Activated CD4-positive, alpha-beta T cell treated with anti-CD3 and anti-CD28 coated beads for 36 hours (primary cell): ENCODE measurements at regions of chr19 and their contacts with region 1.

Region 1: DNA sequence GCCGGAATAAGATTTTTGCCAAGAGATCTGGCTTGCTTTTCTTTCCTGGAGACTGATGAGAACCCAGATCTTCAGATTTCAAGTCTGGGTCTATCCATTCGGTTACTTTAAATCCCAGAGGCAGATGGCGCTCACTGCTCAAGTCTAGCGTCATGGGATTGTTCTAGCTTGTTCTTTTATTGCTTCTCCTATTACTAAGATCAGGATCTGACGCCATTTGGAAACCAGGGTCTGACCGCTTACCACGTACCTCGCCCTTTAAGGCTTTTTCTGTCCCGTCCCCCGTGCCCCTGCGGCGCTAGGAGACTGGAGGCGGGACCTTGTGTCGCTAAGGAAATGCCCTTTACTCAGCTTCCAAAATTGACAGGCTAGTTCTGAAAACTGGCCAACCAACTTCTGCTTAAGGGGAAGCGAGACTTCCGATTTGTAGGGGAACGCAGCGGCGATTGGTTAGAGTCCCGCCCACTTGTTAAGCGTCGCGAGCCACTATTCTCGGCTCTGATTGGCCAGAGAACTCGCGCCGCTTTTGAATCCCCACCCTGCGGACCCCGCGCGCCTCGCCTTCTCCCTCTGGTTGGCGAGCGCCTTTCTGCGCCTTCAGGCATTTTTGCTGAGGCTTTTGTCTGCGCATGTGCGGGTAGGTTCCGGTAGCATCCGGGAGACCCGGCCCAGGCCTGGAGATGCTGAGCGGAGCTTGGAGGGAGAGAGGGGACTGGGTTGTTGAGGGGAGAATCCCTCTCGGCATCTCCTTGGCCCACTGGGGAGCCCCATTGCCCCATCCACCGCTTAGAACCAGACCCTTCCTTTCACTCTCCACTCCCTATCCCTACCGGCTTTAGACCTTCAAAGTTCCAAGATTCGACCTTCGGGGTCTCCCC is 3.8 kb upstream of the C19orf84 start:
- DNase-seq: peak; percentile 99
- ATAC-seq: peak; percentile 88
- H3K4me3 Mint-ChIP-seq: peak overlapping the region; percentile 91
- H3K27ac Mint-ChIP-seq: peak overlapping the region; percentile 96
- H3K4me1 Mint-ChIP-seq: peaks cover 44% of the 10 kb centered on the region
- H3K27me3 Mint-ChIP-seq: no peaks in the 10 kb centered on the region

Region 2: DNA sequence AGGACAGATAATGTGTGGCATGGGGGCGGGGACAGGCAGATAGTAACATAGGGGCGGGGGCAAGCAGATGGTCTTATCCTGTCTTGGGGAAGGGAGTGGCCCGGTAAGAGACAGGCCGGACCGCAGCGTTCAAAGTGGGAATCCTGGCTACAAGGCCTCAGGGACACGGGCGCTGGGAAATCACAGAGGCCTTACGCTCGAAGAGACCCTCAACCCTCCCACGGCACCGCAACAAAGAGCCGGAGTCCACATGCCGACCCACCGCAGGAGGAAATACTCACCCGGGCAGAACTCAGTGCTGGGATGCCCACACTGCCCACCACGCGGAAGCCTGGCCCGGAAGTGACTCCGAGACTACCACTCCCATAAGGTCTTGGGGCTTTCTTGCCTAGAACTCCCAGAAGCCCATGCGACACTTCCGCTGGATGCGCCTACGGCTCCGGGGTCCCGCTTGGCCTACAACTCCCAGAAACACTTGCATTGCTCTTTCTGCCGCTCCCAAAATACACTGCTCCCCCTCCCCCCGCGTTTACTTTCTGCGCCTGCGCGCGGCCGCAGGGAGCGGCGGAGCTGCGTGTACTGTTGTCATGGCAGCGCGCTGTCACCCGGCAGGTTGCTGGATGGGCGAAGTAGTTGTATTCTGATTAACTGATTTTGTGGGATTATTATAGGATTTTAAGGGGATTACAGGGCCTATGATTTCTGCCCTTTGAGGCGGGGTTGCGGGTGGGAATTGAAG is 286.0 kb before region 1 on chr19 and contains the start of gene CTU1:
- CTCF ChIA-PET with region 1: no interaction called
- POLR2A ChIA-PET with region 1: no interaction called
- intact Hi-C with region 1: loop called in 1 of 2 experiments (anchors 1 kb)
- DNase-seq: peak; percentile 99
- ATAC-seq: peak; percentile 98
- H3K4me3 Mint-ChIP-seq: peak within 1 kb of the TSS; percentile 92
- H3K27ac Mint-ChIP-seq: peak within 1 kb of the TSS; percentile 91
- H3K4me1 Mint-ChIP-seq: peaks cover 36% of the 10 kb centered on the region
- H3K27me3 Mint-ChIP-seq: no peaks in the 10 kb centered on the region
- total RNA-seq, gene CTU1: 7.2 to 9.1 TPM

Region 3: GRCh38 chr19:51372649-51373504 is 21.3 kb before region 1 on chr19 and contains the start of gene NKG7:
- CTCF ChIA-PET with region 1: interaction called, 6 read pairs
- POLR2A ChIA-PET with region 1: interaction called, 11 read pairs
- intact Hi-C with region 1: loop called (anchors 1 kb)
- DNase-seq: peak; percentile 89
- ATAC-seq: peak; percentile 83
- H3K4me3 Mint-ChIP-seq: peak within 1 kb of the TSS; percentile 70
- H3K27ac Mint-ChIP-seq: peak within 1 kb of the TSS; percentile 94
- H3K4me1 Mint-ChIP-seq: peaks cover 73% of the 10 kb centered on the region
- H3K27me3 Mint-ChIP-seq: no peaks in the 10 kb centered on the region
- total RNA-seq, gene NKG7: 92.1 to 125 TPM

Region 4: DNA sequence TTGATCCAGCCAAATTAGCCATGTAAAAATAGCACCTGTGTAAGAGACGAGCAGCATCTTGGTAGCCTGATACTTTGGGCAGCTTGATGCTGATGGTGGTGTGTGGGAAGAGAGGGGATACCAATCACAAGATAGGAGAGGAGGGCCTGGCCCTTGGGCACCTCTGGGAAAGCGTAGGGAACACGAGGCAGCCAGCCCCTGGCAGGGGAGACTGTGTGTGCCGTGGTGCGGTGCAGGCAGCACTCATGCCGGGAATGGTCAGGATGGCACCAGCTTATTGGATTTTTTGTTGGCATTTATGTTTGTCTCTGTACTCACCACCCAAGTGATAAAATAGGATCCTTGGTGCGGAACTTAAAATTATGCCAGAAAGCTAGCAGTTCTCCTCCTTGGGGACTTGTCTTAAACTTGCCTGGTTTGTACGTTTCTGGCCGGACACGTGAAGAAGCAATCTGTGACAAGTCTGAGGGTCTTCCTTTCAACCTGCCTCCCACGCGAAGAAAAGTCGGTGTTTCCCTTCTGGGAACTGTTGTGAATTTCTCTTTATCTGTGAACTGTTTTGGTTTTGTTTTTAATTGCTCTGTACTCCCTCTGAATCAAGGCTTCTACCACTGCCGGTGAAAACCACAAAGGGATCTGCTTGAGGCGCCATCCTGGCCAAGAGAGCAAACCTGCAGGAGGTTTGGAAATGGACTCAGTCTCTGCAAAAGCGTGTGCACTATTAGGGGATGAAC is 54.0 kb after region 1 on chr19:
- CTCF ChIA-PET with region 1: interaction called, 6 read pairs
- POLR2A ChIA-PET with region 1: no interaction called
- intact Hi-C with region 1: loop called in 1 of 2 experiments (anchors 2 kb)
- DNase-seq: peak; percentile 77
- ATAC-seq: peak; percentile 87
- H3K4me3 Mint-ChIP-seq: peak overlapping the region; percentile 50
- H3K27ac Mint-ChIP-seq: peak overlapping the region; percentile 85
- H3K4me1 Mint-ChIP-seq: peaks cover 60% of the 10 kb centered on the region
- H3K27me3 Mint-ChIP-seq: no peaks in the 10 kb centered on the region

Region 5: DNA sequence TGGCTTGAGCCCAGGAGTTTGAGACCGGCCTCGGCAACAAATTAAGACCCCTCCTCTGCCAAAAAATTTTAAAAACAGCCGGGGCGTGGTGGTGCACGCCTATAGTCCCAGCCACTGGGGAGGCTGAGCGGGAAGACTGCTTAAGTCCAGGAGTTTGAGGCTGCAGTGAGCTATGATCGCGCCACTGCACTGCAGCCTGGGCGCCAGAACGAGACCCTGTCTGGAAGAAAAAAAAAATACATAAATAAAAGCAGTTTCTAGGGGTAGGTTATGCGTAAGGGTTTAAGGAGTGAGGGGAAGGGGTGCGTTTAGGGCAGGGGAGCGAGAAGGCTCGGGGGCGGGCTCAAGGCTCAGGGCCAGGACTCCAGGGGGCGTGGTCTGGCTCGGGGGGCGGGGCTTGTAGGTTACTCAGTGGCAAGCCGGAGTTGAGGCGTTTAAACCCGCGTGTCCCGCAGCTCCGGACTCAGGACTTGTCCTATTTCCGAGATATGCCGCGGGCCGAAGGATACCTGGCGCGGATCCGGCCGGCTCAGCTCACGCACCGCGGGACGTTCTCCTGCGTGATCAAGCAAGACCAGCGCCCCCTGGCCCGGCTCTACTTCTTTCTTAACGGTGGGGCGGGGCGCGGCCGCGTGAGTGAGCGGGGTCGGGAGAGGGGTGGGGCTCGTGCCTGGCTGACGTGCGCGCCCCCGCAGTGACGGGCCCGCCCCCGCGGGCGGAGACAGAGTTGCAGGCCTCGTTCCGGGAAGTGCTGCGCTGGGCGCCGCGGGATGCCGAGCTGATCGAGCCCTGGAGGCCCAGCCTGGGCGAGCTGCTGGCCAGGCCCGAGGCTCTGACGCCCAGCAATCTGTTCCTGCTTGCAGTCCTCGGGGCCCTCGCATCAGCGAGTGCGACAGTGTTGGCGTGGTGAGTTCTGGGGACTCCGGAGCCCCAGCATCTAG is 309.6 kb after region 1 on chr19:
- CTCF ChIA-PET with region 1: no interaction called
- POLR2A ChIA-PET with region 1: no interaction called
- intact Hi-C with region 1: loop called in 1 of 2 experiments (anchors 1 kb)
- DNase-seq: peak; percentile 98
- ATAC-seq: peak; percentile 88
- H3K4me3 Mint-ChIP-seq: peak overlapping the region; percentile 94
- H3K27ac Mint-ChIP-seq: peak overlapping the region; percentile 95
- H3K4me1 Mint-ChIP-seq: peaks cover 33% of the 10 kb centered on the region
- H3K27me3 Mint-ChIP-seq: peaks cover 5% of the 10 kb centered on the region